ENCODE measurements at regions of chr9 and their contacts with region 1.

Region 1: GRCh38 chr9:72856972-72857623 is 95.8 kb downstream of the ALDH1A1 start:
- DNase-seq: no peak
- ATAC-seq: no peak
- H3K4me3 Mint-ChIP-seq: no peak overlapping the region
- H3K27ac Mint-ChIP-seq: no peak overlapping the region
- H3K4me1 Mint-ChIP-seq: peaks cover 10% of the 10 kb centered on the region
- H3K27me3 Mint-ChIP-seq: no peaks in the 10 kb centered on the region
- CTCF ChIP-seq: no peak

Region 2: GRCh38 chr9:73023025-73023541 is 166.0 kb after region 1 on chr9:
- CTCF ChIA-PET with region 1: interaction called, 8 read pairs
- POLR2A ChIA-PET with region 1: no interaction called
- intact Hi-C with region 1: loop called (anchors 1 kb)
- DNase-seq: no peak
- ATAC-seq: no peak
- H3K4me3 Mint-ChIP-seq: no peak overlapping the region
- H3K27ac Mint-ChIP-seq: no peak overlapping the region
- H3K4me1 Mint-ChIP-seq: peaks cover 42% of the 10 kb centered on the region
- H3K27me3 Mint-ChIP-seq: peaks cover 3% of the 10 kb centered on the region
- CTCF ChIP-seq: peak; percentile 39

Region 3: GRCh38 chr9:73081979-73082657 is 225.0 kb after region 1 on chr9:
- CTCF ChIA-PET with region 1: interaction called, 14 read pairs
- POLR2A ChIA-PET with region 1: no interaction called
- intact Hi-C with region 1: loop called (anchors 1 kb)
- DNase-seq: no peak
- ATAC-seq: no peak
- H3K4me3 Mint-ChIP-seq: no peak overlapping the region
- H3K27ac Mint-ChIP-seq: no peak overlapping the region
- H3K4me1 Mint-ChIP-seq: no peaks in the 10 kb centered on the region
- H3K27me3 Mint-ChIP-seq: no peaks in the 10 kb centered on the region
- CTCF ChIP-seq: no peak

Region 4: GRCh38 chr9:73183917-73184861 is 327.1 kb after region 1 on chr9:
- CTCF ChIA-PET with region 1: no interaction called
- POLR2A ChIA-PET with region 1: no interaction called
- intact Hi-C with region 1: loop called (anchors 2 kb)
- DNase-seq: no peak
- ATAC-seq: no peak
- H3K4me3 Mint-ChIP-seq: no peak overlapping the region
- H3K27ac Mint-ChIP-seq: no peak overlapping the region
- H3K4me1 Mint-ChIP-seq: no peaks in the 10 kb centered on the region
- H3K27me3 Mint-ChIP-seq: peaks cover 3% of the 10 kb centered on the region
- CTCF ChIP-seq: no peak